Stomach (tissue), 19 donors: ENCODE measurements at regions of chr17 and their contacts with region 1.

Region 1: DNA sequence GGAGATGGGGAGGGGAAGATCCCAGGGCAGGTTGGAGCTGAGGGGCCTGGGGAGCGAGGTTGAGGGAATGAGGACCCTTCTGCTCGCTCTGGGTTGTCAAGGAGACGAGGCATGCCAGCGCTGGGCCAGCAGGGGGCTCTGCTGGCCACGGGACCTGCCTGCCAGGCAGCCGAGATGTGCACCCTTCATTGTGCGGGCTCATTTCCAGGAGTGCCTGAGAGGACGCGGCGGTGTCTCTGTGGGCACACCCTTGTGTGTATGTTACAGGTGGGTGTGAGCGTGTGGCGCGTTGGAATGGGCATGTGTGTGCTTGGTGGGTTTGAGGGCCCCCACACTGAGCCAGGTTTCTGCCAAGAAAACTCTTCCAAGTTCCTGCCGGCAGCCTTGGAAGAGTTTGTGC is 15.9 kb downstream of the ARHGAP23 start:
- DNase-seq: peak; percentile 78 to 90
- H3K4me3 ChIP-seq: no peak overlapping the region
- H3K27ac ChIP-seq: peak overlapping the region in 2 of 5 donors; percentile 8 to 52
- H3K4me1 ChIP-seq: peaks cover 7 to 41% (median 25%) of the 10 kb centered on the region in 4 donors
- H3K27me3 ChIP-seq: no peaks in the 10 kb centered on the region
- CTCF ChIP-seq: peak in 5 of 7 experiments; percentile 83 to 95 (median 85)
- EP300 ChIP-seq: no peak
- POLR2A ChIP-seq: no peak

Region 2: DNA sequence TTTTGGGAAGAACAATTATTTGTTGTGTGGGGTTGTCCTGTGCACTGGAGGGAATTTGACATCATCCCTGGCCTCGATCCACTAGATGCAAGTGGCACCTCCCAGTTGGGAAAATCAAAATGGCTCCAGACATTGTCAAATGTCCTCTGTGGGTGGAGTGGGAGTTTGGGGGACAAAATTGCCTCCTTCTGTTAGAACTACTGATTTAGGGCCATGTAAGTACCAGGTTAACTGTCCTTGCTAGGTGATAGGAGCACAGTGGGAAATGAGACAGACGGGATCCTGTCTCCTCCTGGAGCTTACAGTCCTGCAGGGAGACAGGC is 41.0 kb after region 1 on chr17:
- intact Hi-C with region 1: loop called (anchors 5 kb)
- DNase-seq: no peak
- H3K4me3 ChIP-seq: no peak overlapping the region
- H3K27ac ChIP-seq: peak overlapping the region in 4 of 5 donors; percentile 1 to 69 (median 31)
- H3K4me1 ChIP-seq: peaks cover 0 to 40% (median 24%) of the 10 kb centered on the region in 4 donors
- H3K27me3 ChIP-seq: no peaks in the 10 kb centered on the region
- CTCF ChIP-seq: peak in 1 of 7 experiments; percentile 0
- EP300 ChIP-seq: no peak
- POLR2A ChIP-seq: no peak